ENCODE measurements at regions of chr11 and their contacts with region 1.

Region 1: DNA sequence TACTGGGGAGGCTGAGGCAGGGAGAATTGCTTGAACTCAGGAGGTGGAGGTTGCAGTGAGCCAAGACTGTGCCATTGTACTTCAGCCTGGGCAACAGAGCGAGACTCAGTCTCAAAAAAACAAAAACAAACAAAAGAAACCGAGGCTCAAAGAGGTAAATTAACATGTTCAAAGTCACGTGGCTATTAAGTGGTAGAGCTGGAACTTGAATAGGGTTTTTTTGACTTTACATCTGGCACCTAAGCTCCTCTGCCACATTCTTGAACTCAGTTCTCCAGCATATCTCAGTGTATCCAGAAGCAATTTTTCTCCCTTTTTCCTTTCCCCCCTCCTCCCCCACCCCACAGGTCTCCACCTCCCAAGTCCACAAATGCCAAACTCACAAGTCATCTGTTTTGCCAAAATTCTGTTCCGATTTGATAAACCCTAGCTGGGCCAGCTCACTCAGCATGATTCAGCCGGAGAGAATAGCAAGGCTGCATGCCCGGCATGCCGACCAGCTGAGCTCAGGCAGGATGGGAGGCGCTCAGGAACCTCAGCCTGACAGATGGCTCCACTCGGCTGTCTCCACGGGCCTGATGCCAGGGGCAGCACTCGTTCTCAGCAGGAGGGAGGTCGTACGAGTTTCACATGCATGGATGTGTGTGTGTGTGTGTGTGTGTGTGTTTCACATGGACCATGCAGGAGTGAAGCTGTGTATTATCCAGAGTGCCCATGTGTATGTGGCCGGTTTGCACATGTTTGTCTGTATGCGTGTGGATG is 63.2 kb upstream of the RRAS2 start:
- DNase-seq: peak; percentile 69
- ATAC-seq: peak; percentile 91
- H3K4me3 Mint-ChIP-seq: no peak overlapping the region
- H3K27ac Mint-ChIP-seq: no peak overlapping the region
- H3K4me1 Mint-ChIP-seq: peaks cover 12% of the 10 kb centered on the region
- H3K27me3 Mint-ChIP-seq: no peaks in the 10 kb centered on the region; the same call in 1 of the 2 replicates
- CTCF ChIP-seq: no peak

Region 2: GRCh38 chr11:14275076-14275475 is 147.2 kb before region 1 on chr11:
- CTCF ChIA-PET with region 1: interaction called, 12 read pairs
- POLR2A ChIA-PET with region 1: no interaction called
- DNase-seq: no peak
- ATAC-seq: peak; percentile 57; the same call in 1 of the 2 replicates
- H3K4me3 Mint-ChIP-seq: no peak overlapping the region
- H3K27ac Mint-ChIP-seq: peak overlapping the region; percentile 73
- H3K4me1 Mint-ChIP-seq: peaks cover 13% of the 10 kb centered on the region
- H3K27me3 Mint-ChIP-seq: peaks cover 6% of the 10 kb centered on the region; the same call in 1 of the 2 replicates
- CTCF ChIP-seq: no peak

Region 3: DNA sequence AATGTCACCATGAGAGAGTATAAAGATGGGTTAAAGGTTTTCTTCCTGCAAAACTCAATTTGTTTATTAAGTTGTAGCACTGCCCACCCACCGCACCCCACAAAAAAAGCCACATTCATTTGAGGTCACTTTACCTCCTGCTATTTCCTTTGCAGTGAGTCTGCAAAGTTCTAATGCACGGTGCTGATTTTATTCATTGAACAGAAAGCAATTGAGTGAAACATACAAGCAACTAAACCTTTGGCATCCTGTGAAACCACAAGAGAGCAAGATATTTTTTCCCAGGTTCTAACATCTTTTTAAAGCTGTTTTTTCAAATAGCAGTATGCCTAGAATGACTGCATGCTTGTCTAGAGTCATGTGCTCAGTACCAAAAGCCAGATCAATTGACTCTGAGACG is 102.2 kb before region 1 on chr11:
- CTCF ChIA-PET with region 1: interaction called, 11 read pairs
- POLR2A ChIA-PET with region 1: interaction called, 4 read pairs
- DNase-seq: no peak
- ATAC-seq: no peak
- H3K4me3 Mint-ChIP-seq: no peak overlapping the region
- H3K27ac Mint-ChIP-seq: peak overlapping the region; percentile 90
- H3K4me1 Mint-ChIP-seq: peaks cover 83% of the 10 kb centered on the region
- H3K27me3 Mint-ChIP-seq: no peaks in the 10 kb centered on the region
- CTCF ChIP-seq: no peak

Region 4: DNA sequence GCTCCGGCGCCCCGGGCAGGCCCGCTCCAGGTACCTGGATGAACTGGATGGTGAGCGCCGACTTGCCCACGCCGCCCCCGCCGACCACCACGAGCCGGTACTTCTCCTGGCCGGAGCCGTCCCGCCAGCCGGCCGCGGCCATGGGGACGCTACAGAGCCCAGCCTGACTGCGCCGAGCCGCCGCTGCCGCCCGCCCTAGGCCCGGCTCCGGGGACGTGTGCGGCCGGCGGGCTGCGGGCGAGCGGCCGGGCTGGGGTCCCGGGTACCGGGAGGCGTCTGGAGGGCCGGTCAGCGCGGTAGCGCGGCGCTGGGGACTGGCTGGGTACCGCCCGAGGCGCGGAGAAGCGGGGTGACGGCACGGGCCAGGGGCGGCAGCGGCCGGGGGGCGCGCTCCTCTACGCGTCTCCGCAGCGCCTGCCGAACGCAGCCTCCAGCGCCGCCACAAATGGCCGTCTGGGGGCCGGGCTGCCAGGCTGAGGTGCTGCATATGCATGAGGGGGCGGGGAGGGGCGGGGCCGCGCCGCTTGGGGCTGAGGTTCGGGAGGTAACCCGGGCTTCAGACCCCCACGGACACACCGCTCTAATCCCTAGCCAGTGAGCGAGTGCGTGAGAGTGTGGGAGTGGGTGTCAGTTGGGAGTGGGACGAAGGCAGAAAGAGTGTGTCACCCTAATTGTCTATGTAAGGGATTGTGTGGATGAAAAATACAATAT is 63.3 kb before region 1 on chr11 and contains the start of gene RRAS2:
- CTCF ChIA-PET with region 1: interaction called, 13 read pairs
- POLR2A ChIA-PET with region 1: no interaction called
- DNase-seq: peak; percentile 85
- ATAC-seq: peak; percentile 87
- H3K4me3 Mint-ChIP-seq: peak within 1 kb of the TSS; percentile 98
- H3K27ac Mint-ChIP-seq: peak within 1 kb of the TSS; percentile 95
- H3K4me1 Mint-ChIP-seq: peaks cover 51% of the 10 kb centered on the region
- H3K27me3 Mint-ChIP-seq: no peaks in the 10 kb centered on the region
- CTCF ChIP-seq: no peak
- total RNA-seq, gene RRAS2: 161 to 164 TPM (median 164 TPM) in 3 replicates

Region 5: DNA sequence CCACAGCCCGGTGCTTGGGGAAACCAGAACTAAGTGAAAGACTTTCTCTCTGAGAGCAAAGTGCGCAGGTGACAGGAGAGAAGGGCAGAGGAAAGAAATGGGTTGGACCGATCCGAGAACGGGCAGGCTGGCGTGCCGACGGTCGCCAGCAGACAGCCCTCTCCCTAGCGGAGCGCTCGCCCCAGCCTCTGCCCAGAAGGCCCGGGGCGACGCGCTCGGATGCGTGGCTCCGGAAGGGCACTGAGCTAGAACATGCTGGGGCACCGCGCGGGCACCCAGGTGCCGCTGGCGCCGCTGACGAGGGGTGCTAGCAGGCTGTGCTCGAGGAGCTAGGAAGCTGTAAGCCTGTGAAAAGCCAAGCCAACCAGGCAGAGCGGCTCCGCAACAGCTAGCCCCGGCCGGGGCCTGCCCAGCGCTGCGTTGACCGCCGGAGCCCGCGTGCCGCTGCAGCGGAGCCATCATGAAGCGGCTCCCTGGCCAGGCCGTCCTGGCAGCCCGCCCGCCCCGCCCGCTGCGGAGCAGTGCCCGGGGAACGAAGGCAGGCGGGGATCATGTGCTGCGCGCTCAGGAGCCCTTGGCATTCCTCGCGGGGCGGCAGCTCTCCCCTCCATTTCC is 41.2 kb before region 1 on chr11:
- CTCF ChIA-PET with region 1: interaction called, 17 read pairs
- POLR2A ChIA-PET with region 1: interaction called, 3 read pairs
- DNase-seq: peak; percentile 69
- ATAC-seq: peak; percentile 90
- H3K4me3 Mint-ChIP-seq: peak overlapping the region; percentile 67
- H3K27ac Mint-ChIP-seq: no peak overlapping the region
- H3K4me1 Mint-ChIP-seq: peaks cover 9% of the 10 kb centered on the region; the same call in 1 of the 2 replicates
- H3K27me3 Mint-ChIP-seq: peaks cover 41% of the 10 kb centered on the region
- CTCF ChIP-seq: no peak

Region 6: GRCh38 chr11:14454861-14455632 is 32.8 kb after region 1 on chr11:
- CTCF ChIA-PET with region 1: interaction called, 37 read pairs
- POLR2A ChIA-PET with region 1: no interaction called
- DNase-seq: no peak
- ATAC-seq: peak; percentile 39
- H3K4me3 Mint-ChIP-seq: no peak overlapping the region
- H3K27ac Mint-ChIP-seq: no peak overlapping the region
- H3K4me1 Mint-ChIP-seq: no peaks in the 10 kb centered on the region
- H3K27me3 Mint-ChIP-seq: no peaks in the 10 kb centered on the region
- CTCF ChIP-seq: peak; percentile 40